ENCODE measurements at regions of chr14 and their contacts with region 1.

Region 1: GRCh38 chr14:29724991-29725390 is 202.7 kb downstream of the PRKD1 start:
- DNase-seq: no peak
- H3K4me3 ChIP-seq: no peak overlapping the region
- H3K27ac ChIP-seq: no peak overlapping the region
- H3K4me1 ChIP-seq: no peaks in the 10 kb centered on the region
- H3K27me3 ChIP-seq: no peaks in the 10 kb centered on the region
- CTCF ChIP-seq: no peak

Region 2: DNA sequence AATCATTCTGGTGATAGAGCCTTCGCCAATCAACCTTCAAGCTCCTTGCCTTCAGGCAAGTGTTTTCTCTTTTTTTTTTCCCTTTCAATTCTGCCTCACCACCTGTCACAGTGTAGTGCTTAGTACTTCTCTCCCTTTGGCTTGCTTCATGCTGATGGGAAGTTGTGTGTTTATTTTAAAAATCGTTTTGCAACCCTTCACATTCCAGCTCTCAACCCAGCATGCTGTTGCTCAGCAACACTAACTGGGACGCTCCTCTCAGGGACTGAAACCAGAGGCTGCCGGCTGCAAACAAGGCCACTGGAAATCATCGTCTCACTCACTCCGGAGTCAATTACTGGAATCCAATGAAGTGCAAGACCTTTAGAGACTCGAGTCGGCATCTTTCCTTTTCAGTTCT is 140.0 kb before region 1 on chr14:
- intact Hi-C with region 1: no loop called
- DNase-seq: no peak
- H3K4me3 ChIP-seq: no peak overlapping the region
- H3K27ac ChIP-seq: no peak overlapping the region
- H3K4me1 ChIP-seq: no peaks in the 10 kb centered on the region
- H3K27me3 ChIP-seq: no peaks in the 10 kb centered on the region
- CTCF ChIP-seq: no peak

Region 3: GRCh38 chr14:29982993-29983392 is 258.0 kb after region 1 on chr14:
- intact Hi-C with region 1: no loop called
- DNase-seq: no peak
- H3K4me3 ChIP-seq: no peak overlapping the region
- H3K27ac ChIP-seq: no peak overlapping the region
- H3K4me1 ChIP-seq: no peaks in the 10 kb centered on the region
- H3K27me3 ChIP-seq: no peaks in the 10 kb centered on the region
- CTCF ChIP-seq: no peak

Region 4: DNA sequence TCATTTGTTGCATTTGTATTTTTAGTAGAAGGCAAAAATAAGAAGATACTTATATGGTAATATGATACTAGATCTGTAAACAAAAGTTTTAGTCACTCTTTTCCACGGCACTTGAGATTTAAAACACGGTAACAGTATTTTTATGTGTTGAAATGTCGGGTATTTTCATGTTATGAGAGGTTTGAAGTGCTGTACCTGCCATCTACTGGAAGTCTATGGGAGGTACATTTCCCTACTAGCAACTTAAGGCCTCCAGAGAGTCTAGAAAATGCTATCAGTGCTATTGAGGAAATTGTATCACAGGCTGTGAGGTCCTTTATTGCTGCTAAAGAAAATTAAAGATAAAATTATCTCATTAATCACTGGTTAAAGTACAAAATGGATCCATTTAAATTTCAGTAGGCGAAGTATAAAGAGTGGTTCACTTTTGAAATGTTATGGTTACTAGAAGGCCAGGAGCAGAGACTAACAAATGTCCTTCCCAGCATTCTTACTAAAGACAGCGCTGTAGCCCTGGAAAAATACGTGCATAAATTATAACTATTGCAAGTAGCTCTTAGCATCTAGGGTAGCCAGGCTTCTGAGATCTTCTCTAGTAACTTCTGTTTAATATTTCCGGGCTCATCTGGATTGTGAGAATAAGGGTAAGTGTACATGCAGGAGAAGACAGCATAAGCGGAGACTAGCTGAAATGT is 280.3 kb after region 1 on chr14:
- intact Hi-C with region 1: loop called (anchors 10 kb)
- DNase-seq: no peak
- H3K4me3 ChIP-seq: no peak overlapping the region
- H3K27ac ChIP-seq: no peak overlapping the region
- H3K4me1 ChIP-seq: no peaks in the 10 kb centered on the region
- H3K27me3 ChIP-seq: no peaks in the 10 kb centered on the region
- CTCF ChIP-seq: peak; percentile 66

Measured in colonic mucosa (tissue), 4 donors.